Activated CD8-positive, alpha-beta T cell treated with anti-CD3 and anti-CD28 coated beads, Interleukin-2, amount 10 ng/mL, durations not matched to agents 7 days and 5 days (primary cell): ENCODE measurements at regions of chr7 and their contacts with region 1.

Region 1: GRCh38 chr7:106461993-106462859 is 177.4 kb upstream of the NAMPT start:
- DNase-seq: no peak
- ATAC-seq: no peak
- H3K4me3 Mint-ChIP-seq: no peak overlapping the region
- H3K27ac Mint-ChIP-seq: no peak overlapping the region
- H3K4me1 Mint-ChIP-seq: peaks cover 10% of the 10 kb centered on the region
- H3K27me3 Mint-ChIP-seq: no peaks in the 10 kb centered on the region

Region 2: GRCh38 chr7:106166655-106167342 is 295.4 kb before region 1 on chr7:
- CTCF ChIA-PET with region 1: interaction called, 180 read pairs
- POLR2A ChIA-PET with region 1: no interaction called
- DNase-seq: peak; percentile 57
- ATAC-seq: no peak
- H3K4me3 Mint-ChIP-seq: no peak overlapping the region
- H3K27ac Mint-ChIP-seq: no peak overlapping the region
- H3K4me1 Mint-ChIP-seq: no peaks in the 10 kb centered on the region
- H3K27me3 Mint-ChIP-seq: peaks cover 17% of the 10 kb centered on the region

Region 3: DNA sequence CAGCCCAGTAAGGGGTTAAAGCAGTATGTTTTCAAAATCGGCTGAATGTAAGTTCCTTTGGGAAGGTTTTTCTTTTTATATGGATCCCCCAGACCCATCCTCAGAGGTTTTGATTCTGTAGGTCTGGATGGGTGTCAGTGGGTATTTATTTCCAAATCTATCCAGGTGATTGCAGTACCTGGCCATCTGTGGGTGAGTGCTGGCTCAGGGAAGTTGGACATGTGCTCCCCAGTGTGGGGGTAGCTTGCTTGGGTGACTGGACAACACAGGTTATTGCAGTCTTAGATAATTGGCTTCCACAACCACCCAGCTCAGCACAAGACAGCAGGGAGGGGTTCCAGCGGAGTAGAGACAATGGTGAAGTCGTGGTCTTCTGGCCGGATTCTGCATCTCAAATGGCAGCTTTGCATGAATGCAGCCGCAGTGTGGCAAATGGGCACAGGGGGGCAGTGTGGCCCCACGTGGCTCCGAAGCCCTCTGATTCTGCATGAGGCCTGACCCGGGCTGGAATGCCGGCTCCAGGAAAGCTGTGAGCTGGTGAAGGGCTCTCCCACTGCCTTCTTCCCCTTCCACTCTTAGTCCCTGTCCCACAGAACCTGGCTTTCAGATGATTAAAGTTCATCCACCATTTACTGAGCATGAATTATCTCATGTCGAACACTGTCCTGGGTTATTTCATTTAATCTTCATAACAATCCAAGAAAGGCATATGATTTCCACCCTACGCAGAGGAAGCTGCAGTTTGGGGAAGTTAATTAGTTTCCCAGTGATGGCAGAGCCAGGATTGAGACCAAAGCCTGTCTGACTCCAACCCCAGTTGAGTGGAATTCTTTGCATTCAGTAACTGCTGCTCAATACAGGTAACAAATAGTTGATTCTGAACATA is 285.6 kb before region 1 on chr7:
- CTCF ChIA-PET with region 1: interaction called, 180 read pairs
- POLR2A ChIA-PET with region 1: no interaction called
- DNase-seq: peak; percentile 75
- ATAC-seq: peak; percentile 81
- H3K4me3 Mint-ChIP-seq: no peak overlapping the region
- H3K27ac Mint-ChIP-seq: no peak overlapping the region
- H3K4me1 Mint-ChIP-seq: peaks cover 4% of the 10 kb centered on the region
- H3K27me3 Mint-ChIP-seq: peaks cover 22% of the 10 kb centered on the region

Region 4: DNA sequence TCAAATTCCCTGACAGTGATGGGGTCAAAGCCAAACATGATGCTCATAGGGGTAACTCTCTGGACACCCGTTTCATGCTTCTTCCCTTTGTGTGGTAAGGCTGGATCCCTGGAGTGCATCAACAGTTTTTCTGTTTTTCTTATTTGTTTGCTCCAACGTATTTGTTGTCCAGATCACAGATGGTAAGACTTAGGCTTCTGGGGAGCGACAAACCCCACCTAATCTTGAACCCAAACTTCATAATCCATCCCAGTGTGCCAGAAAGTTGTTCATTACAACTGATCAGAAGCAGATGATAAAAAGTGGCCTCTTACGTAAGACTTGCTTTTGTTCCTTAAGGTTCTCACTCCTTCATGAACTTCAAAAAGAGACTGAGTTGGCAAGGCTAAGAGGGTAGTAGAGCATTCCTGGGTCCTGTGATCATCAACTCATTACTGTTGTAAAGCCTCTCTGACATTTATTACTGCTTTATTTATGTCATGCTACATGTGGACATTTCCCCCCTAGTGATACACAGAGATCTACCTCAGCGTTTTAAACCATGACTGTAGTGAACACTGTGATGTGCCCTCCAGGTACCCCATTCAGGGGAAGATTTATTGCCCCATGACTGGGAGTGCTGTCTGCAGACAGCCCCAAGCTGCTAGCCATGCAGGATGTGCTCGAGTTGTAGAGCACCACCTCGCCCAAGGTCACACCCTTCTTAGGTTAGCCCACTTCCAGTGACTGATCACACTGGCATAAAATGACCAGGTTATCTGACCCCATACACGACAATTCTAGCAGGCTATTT is 73.2 kb after region 1 on chr7:
- CTCF ChIA-PET with region 1: no interaction called
- POLR2A ChIA-PET with region 1: no interaction called
- DNase-seq: no peak
- ATAC-seq: no peak
- H3K4me3 Mint-ChIP-seq: no peak overlapping the region
- H3K27ac Mint-ChIP-seq: no peak overlapping the region
- H3K4me1 Mint-ChIP-seq: peaks cover 3% of the 10 kb centered on the region
- H3K27me3 Mint-ChIP-seq: no peaks in the 10 kb centered on the region

Region 5: GRCh38 chr7:106870983-106871410 is 408.8 kb after region 1 on chr7:
- CTCF ChIA-PET with region 1: no interaction called
- POLR2A ChIA-PET with region 1: no interaction called
- DNase-seq: no peak
- ATAC-seq: peak; percentile 85
- H3K4me3 Mint-ChIP-seq: peak overlapping the region; percentile 59
- H3K27ac Mint-ChIP-seq: peak overlapping the region; percentile 61
- H3K4me1 Mint-ChIP-seq: peaks cover 72% of the 10 kb centered on the region
- H3K27me3 Mint-ChIP-seq: no peaks in the 10 kb centered on the region